GM10248 (cell line): ENCODE measurements at regions of chr1 and their contacts with region 1.

Region 1: DNA sequence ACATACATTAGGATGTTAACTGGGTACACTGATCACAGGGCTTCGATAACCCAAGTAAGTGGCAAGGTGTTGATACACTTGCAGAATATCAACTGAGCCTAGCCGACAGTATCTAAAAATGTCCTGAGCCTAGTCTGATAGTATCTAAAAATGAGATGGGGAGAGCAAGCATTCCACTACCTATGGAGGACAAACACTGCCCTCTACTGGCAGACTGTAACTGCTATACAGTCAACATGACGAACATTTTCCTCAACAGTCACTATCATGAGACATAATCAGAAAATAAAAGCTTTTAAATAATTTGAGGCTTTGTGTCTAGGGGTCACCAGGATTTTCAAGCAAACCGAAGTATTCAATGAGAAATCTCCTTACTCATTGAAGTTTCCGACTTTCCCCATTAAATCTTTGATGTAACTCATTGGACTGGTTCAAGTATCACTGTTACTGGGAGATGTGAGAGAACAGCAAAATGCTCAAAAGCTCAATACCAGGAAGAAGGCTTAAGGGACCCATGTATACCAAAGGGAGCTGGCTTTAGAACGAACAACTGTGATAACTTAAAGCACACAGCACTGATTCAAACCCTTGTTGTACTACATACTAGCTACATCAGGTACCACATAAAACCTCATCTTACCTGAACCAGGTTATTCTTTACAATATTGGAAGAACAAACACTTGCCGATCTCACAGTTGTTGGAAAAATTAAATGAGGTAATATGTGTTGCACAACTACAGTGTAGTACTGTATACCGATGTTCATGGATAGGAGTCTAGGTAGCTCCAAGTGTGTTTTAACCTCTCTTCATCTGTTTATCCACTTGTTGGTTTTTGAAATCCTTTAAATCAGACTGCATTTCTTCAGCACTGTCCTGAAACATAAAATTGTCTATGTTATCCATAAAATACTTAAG is 31.1 kb upstream of the SLC45A3 start:
- DNase-seq: peak; percentile 58
- CTCF ChIP-seq: peak; percentile 83

Region 2: GRCh38 chr1:205325334-205325884 is 386.0 kb before region 1 on chr1:
- CTCF ChIA-PET with region 1: no interaction called
- POLR2A ChIA-PET with region 1: no interaction called
- DNase-seq: peak; percentile 63
- CTCF ChIP-seq: peak; percentile 73

Region 3: GRCh38 chr1:205528887-205529825 is 182.2 kb before region 1 on chr1:
- CTCF ChIA-PET with region 1: interaction called, 23 read pairs
- POLR2A ChIA-PET with region 1: no interaction called
- DNase-seq: peak; percentile 90
- CTCF ChIP-seq: peak; percentile 97

Region 4: GRCh38 chr1:205668951-205669340 is 42.4 kb before region 1 on chr1:
- CTCF ChIA-PET with region 1: interaction called, 372 read pairs
- POLR2A ChIA-PET with region 1: no interaction called
- DNase-seq: peak; percentile 76
- CTCF ChIP-seq: peak; percentile 24

Region 5: DNA sequence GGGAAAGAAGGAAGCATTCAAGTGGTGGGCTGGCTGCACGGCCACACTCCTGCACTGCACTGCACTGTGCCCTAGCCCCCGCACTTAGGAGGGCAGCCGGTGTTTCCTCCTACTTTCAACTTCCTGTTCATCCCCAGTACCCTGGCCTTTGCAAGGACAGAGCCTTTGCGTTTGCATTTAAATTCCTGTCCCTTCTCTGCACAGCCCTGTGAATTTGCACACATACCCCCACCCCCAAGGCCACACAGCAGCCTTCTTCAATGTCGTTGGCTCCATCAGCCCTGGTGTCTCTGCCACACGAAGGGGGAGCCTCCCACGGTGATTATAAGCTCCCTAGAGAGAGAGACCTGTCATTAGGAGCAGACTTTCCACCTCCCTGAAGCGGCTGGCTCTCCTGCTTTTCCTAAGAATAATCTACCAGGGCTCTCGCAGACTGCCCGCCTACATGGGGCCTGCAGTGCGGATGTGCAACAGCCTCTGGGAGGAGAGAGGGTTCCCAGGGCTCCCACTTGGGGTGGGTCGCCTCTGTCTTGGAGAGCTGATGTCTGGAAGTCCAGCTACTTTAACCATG is 17.9 kb before region 1 on chr1:
- CTCF ChIA-PET with region 1: interaction called, 27 read pairs
- POLR2A ChIA-PET with region 1: no interaction called
- DNase-seq: peak; percentile 31
- CTCF ChIP-seq: no peak

Region 6: GRCh38 chr1:205729945-205730610 is 18.7 kb after region 1 on chr1:
- CTCF ChIA-PET with region 1: interaction called, 90 read pairs
- POLR2A ChIA-PET with region 1: interaction called, 3 read pairs
- DNase-seq: no peak
- CTCF ChIP-seq: no peak

Region 7: DNA sequence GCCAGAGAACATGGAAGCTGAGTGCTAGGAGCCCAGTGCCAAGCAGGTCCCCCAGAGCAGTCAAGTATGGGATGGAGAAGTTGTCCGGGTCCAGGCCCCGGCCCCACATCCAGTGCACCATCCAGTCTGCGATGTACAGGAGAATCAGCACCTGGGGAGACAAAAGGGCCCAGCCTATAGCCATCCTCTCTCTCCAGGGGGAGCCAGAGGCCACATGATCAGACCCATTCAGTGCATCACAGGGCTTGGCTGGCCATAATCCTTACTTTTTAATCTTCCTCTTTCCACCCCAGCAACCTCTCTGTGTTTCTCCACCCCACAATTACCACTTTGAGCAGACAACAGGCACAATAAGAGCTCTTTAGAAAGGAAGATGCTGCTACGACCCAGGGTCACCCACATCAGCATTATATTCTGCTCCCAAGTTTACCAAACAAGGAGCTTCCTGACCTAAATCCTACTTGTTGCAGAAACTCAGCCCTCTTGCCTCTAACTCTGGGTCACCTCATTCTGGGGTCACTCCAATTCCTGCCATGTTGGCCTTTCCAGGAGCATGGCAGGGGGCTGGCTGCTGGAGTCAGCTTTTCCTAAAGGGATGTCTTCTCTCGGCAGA is 80.3 kb after region 1 on chr1:
- CTCF ChIA-PET with region 1: interaction called, 11 read pairs
- POLR2A ChIA-PET with region 1: no interaction called
- DNase-seq: peak; percentile 77
- CTCF ChIP-seq: peak; percentile 75

Region 8: GRCh38 chr1:205961405-205961804 is 250.0 kb after region 1 on chr1:
- CTCF ChIA-PET with region 1: no interaction called
- POLR2A ChIA-PET with region 1: no interaction called
- DNase-seq: peak; percentile 57
- CTCF ChIP-seq: no peak